PC-3 (cell line): ENCODE measurements at regions of chr11 and their contacts with region 1.

Region 1: GRCh38 chr11:102225689-102226568 is 91.4 kb upstream of the BIRC3 start:
- DNase-seq: peak; percentile 87
- ATAC-seq: peak; percentile 93
- H3K4me3 ChIP-seq: peak overlapping the region; percentile 51
- H3K27ac ChIP-seq: peak overlapping the region; percentile 64
- H3K4me1 ChIP-seq: peaks cover 47% of the 10 kb centered on the region
- H3K27me3 ChIP-seq: no peaks in the 10 kb centered on the region
- CTCF ChIP-seq: no peak

Region 2: GRCh38 chr11:102187416-102188151 is 38.3 kb before region 1 on chr11:
- CTCF ChIA-PET with region 1: no interaction called
- POLR2A ChIA-PET with region 1: no interaction called
- intact Hi-C with region 1: loop called (anchors 5 kb)
- DNase-seq: no peak
- ATAC-seq: no peak
- H3K4me3 ChIP-seq: no peak overlapping the region
- H3K27ac ChIP-seq: no peak overlapping the region
- H3K4me1 ChIP-seq: no peaks in the 10 kb centered on the region
- H3K27me3 ChIP-seq: no peaks in the 10 kb centered on the region
- CTCF ChIP-seq: no peak

Region 3: GRCh38 chr11:102197670-102198139 is 28.2 kb before region 1 on chr11:
- CTCF ChIA-PET with region 1: no interaction called
- POLR2A ChIA-PET with region 1: no interaction called
- intact Hi-C with region 1: no loop called
- DNase-seq: no peak
- ATAC-seq: no peak
- H3K4me3 ChIP-seq: no peak overlapping the region
- H3K27ac ChIP-seq: no peak overlapping the region
- H3K4me1 ChIP-seq: 0 out of 2 replicates have a peak, but pooled peaks cover 8% of the 10 kb centered on the region
- H3K27me3 ChIP-seq: no peaks in the 10 kb centered on the region
- CTCF ChIP-seq: no peak

Region 4: DNA sequence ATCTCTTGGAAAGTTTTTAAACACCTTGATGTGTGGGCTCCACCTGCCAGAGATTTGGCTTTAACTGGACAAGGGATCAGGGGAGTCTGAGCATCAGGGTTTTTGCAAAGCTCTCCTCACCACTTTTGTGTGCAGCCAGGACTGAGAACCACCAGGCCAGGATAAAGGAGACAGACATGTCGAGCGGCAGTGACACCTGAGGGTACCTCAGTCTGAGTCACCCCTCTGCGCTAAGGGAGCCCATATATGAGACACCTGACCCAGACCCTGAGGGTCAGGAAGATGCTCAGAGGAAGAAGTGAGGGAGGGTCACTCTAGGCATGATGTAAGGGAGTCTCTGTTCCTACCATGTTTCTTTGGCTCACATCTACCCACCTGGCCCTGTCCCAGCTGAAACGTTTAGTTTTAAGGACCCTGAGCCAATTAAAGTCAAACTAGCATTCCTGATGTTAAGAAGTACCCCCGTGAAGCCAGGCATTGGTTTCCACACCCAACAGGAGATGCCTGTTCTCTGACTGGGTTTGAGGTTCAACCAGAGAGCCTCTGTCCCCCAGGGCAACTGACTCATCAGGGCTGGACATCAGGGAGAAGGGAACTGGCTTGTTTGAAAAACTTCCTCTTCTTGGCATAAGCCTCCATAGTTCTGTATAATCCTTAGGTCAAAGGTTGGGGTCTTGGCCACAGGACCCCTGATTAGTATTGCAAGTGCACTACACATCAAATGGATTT is 18.9 kb after region 1 on chr11:
- CTCF ChIA-PET with region 1: no interaction called
- POLR2A ChIA-PET with region 1: interaction called, 6 read pairs
- intact Hi-C with region 1: loop called (anchors 2 kb)
- DNase-seq: peak; percentile 99
- ATAC-seq: peak; percentile 95
- H3K4me3 ChIP-seq: no peak overlapping the region
- H3K27ac ChIP-seq: peak overlapping the region; percentile 54
- H3K4me1 ChIP-seq: peaks cover 30% of the 10 kb centered on the region
- H3K27me3 ChIP-seq: no peaks in the 10 kb centered on the region
- CTCF ChIP-seq: no peak